Activated naive CD4-positive, alpha-beta T cell treated with anti-CD3 and anti-CD28 coated beads for 36 hours (primary cell): ENCODE measurements at regions of chr3 and their contacts with region 1.

Region 1: GRCh38 chr3:190321789-190322603 is at the start of gene CLDN1:
- DNase-seq: peak; percentile 75
- H3K4me3 Mint-ChIP-seq: peak within 1 kb of the TSS; percentile 75
- H3K27ac Mint-ChIP-seq: no peak within 1 kb of the TSS
- H3K4me1 Mint-ChIP-seq: peaks cover 30% of the 10 kb centered on the region
- H3K27me3 Mint-ChIP-seq: peaks cover 36% of the 10 kb centered on the region
- total RNA-seq, gene CLDN1: 0.88 to 0.96 TPM

Region 2: GRCh38 chr3:189324538-189325138 is 997.4 kb before region 1 on chr3:
- CTCF ChIA-PET with region 1: no interaction called
- intact Hi-C with region 1: loop called (anchors 1 kb)
- DNase-seq: peak; percentile 95
- H3K4me3 Mint-ChIP-seq: peak overlapping the region; percentile 36
- H3K27ac Mint-ChIP-seq: peak overlapping the region; percentile 88
- H3K4me1 Mint-ChIP-seq: peaks cover 56% of the 10 kb centered on the region
- H3K27me3 Mint-ChIP-seq: no peaks in the 10 kb centered on the region

Region 3: GRCh38 chr3:190205739-190206138 is 116.3 kb before region 1 on chr3:
- CTCF ChIA-PET with region 1: interaction called, 3 read pairs
- intact Hi-C with region 1: loop called (anchors 1 kb)
- DNase-seq: no peak
- H3K4me3 Mint-ChIP-seq: no peak overlapping the region
- H3K27ac Mint-ChIP-seq: no peak overlapping the region
- H3K4me1 Mint-ChIP-seq: peaks cover 16% of the 10 kb centered on the region
- H3K27me3 Mint-ChIP-seq: peaks cover 18% of the 10 kb centered on the region

Region 4: DNA sequence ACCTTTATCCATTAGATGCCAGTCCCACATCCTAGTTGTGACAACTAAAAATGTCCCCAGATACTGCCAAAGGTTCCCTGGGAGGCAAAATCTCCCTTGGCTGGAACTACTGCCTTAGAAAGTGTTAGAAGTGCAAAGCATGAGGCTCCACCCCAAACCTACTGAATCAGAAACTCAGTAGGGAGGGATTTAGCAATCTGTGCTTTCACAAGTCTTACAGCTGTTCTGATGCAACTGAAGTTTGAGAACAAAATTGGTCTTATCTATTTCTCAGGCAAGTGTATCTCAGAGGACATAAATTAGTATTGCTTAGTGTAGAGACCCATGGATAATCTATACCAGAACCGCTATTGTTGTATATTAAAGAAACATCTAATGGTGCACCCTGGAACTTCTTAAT is 69.9 kb before region 1 on chr3:
- CTCF ChIA-PET with region 1: no interaction called
- intact Hi-C with region 1: no loop called
- DNase-seq: no peak
- H3K4me3 Mint-ChIP-seq: no peak overlapping the region
- H3K27ac Mint-ChIP-seq: no peak overlapping the region
- H3K4me1 Mint-ChIP-seq: no peaks in the 10 kb centered on the region
- H3K27me3 Mint-ChIP-seq: peaks cover 3% of the 10 kb centered on the region

Region 5: GRCh38 chr3:190301591-190301990 is 20.4 kb before region 1 on chr3:
- CTCF ChIA-PET with region 1: interaction called, 7 read pairs
- intact Hi-C with region 1: loop called (anchors 1 kb)
- DNase-seq: no peak
- H3K4me3 Mint-ChIP-seq: peak overlapping the region; percentile 29
- H3K27ac Mint-ChIP-seq: peak overlapping the region; percentile 41
- H3K4me1 Mint-ChIP-seq: peaks cover 21% of the 10 kb centered on the region
- H3K27me3 Mint-ChIP-seq: peaks cover 2% of the 10 kb centered on the region

Region 6: DNA sequence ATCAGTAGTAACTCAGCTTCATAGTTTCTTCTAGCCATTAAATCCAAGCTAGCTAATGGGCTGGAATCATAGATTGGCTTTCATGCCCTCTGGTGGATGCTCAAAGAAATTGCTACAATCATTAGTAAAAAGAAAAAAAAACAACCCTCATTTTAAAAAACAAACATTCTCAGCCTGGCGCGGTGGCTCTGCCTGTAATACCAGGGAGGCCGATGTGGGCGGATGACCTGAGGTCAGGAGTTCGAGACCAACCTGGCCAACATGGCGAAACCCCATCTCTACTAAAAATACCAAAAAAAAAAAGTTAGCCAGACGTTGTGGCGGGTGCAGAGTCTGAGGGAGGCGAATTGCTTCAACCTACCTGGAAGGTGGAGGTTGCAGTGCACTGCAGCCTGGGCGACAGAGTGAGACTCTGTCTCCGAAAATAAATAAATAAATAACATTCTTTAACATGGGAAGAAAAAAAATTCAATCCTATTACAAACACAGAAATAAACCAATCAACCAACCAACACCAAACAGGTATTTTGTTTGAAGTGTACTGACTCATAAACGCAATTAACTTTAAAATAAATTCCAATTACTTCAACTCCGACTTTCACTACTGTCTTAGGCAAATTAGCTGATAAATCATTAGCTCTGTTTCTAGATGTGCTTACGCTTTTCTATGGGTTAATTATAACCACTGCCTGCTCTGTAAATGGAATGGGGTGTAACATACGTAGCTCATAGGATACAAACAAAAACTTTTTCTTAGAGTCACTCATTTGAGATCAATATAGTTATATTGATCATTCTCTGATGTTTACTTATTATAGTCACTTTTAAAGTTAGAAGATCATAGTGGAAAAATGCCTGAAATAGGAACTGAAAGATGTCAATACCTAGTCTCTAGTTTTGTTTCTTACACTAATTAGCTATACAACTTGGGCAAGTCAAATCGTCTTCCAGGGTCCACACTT is 102.8 kb after region 1 on chr3:
- CTCF ChIA-PET with region 1: interaction called, 3 read pairs
- intact Hi-C with region 1: loop called (anchors 5 kb)
- DNase-seq: peak; percentile 59
- H3K4me3 Mint-ChIP-seq: no peak overlapping the region
- H3K27ac Mint-ChIP-seq: no peak overlapping the region
- H3K4me1 Mint-ChIP-seq: peaks cover 2% of the 10 kb centered on the region
- H3K27me3 Mint-ChIP-seq: no peaks in the 10 kb centered on the region

Region 7: DNA sequence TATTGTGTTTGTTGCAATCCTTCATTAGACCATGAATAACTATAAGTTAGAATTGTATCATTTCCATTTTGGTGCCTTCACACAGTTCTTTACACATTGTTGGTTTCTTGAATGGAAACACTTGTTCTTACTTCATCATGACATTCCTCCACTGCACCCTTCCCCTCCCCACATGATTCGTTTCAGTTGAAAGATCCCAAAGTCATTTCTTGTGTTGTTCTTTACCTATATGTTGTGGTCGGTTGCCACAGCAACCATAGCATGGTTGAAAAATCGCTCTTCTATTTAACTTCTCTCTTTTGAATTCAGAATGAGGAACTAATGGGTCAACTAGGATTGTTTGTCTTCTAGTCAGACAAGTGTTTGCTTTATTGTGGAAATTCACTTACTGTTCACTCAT is 295.2 kb after region 1 on chr3:
- CTCF ChIA-PET with region 1: no interaction called
- intact Hi-C with region 1: loop called (anchors 1 kb)
- DNase-seq: peak; percentile 62
- H3K4me3 Mint-ChIP-seq: no peak overlapping the region
- H3K27ac Mint-ChIP-seq: peak overlapping the region; percentile 95
- H3K4me1 Mint-ChIP-seq: peaks cover 48% of the 10 kb centered on the region
- H3K27me3 Mint-ChIP-seq: no peaks in the 10 kb centered on the region